Activated T-helper 1 cell treated with anti-CD3 and anti-CD28 coated beads, Interleukin-12 subunit alpha, Interleukin-12 subunit beta, Interleukin-2, Interleukin-4 antibody, amounts not matched to agents 30 ng/mL and 10 ng/mL and 1 ng/mL, durations not matched to agents 14 hours and 24 hours and 36 hours (primary cell): ENCODE measurements at regions of chr22 and their contacts with region 1.

Region 1: DNA sequence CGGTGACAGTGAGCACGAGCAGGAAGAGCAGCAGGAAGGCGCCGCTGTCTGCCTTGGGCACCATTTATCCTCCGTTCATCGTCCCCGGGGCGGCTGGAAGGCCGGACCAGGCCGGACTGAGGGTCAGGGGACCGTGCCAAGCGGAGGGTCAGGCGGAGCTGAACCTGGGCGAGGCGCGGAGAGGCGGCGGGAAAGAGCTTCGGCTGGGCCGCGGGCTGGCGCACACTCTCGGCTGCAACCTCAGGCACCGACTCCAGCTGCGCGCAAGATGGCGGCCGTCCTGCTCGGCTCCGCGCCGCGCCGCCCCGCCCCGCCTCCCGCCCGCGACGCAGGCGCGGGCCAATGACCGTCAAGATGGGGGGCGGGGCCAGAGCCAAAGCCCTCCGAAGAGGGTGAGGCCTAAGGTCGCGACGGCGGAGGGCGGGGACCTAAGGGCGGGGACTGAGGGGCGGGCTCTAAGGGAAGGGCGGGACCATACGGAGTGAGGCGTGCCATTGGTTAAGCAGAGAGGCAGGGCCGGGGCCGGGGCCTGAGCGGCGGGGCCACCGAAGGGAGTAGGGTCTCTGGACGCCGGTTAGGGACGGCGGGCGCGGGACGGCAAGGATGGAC is at the start of gene DGCR2:
- DNase-seq: peak; percentile 91
- H3K4me3 Mint-ChIP-seq: peak within 1 kb of the TSS; percentile 89
- H3K27ac Mint-ChIP-seq: peak within 1 kb of the TSS; percentile 64
- H3K4me1 Mint-ChIP-seq: peaks cover 47% of the 10 kb centered on the region
- H3K27me3 Mint-ChIP-seq: peaks cover 1% of the 10 kb centered on the region
- total RNA-seq, gene DGCR2: 23.2 and 24.1 TPM in 2 replicates

Region 2: GRCh38 chr22:19109198-19110067 is 12.8 kb before region 1 on chr22:
- intact Hi-C with region 1: loop called (anchors 1 kb)
- DNase-seq: peak; percentile 42
- H3K4me3 Mint-ChIP-seq: peak overlapping the region; percentile 66
- H3K27ac Mint-ChIP-seq: peak overlapping the region; percentile 62
- H3K4me1 Mint-ChIP-seq: peaks cover 54% of the 10 kb centered on the region
- H3K27me3 Mint-ChIP-seq: no peaks in the 10 kb centered on the region

Region 3: GRCh38 chr22:19143967-19144400 is 21.7 kb after region 1 on chr22:
- intact Hi-C with region 1: loop called (anchors 1 kb)
- DNase-seq: peak; percentile 40
- H3K4me3 Mint-ChIP-seq: peak overlapping the region; percentile 98
- H3K27ac Mint-ChIP-seq: peak overlapping the region; percentile 97
- H3K4me1 Mint-ChIP-seq: peaks cover 23% of the 10 kb centered on the region
- H3K27me3 Mint-ChIP-seq: peaks cover 22% of the 10 kb centered on the region

Region 4: DNA sequence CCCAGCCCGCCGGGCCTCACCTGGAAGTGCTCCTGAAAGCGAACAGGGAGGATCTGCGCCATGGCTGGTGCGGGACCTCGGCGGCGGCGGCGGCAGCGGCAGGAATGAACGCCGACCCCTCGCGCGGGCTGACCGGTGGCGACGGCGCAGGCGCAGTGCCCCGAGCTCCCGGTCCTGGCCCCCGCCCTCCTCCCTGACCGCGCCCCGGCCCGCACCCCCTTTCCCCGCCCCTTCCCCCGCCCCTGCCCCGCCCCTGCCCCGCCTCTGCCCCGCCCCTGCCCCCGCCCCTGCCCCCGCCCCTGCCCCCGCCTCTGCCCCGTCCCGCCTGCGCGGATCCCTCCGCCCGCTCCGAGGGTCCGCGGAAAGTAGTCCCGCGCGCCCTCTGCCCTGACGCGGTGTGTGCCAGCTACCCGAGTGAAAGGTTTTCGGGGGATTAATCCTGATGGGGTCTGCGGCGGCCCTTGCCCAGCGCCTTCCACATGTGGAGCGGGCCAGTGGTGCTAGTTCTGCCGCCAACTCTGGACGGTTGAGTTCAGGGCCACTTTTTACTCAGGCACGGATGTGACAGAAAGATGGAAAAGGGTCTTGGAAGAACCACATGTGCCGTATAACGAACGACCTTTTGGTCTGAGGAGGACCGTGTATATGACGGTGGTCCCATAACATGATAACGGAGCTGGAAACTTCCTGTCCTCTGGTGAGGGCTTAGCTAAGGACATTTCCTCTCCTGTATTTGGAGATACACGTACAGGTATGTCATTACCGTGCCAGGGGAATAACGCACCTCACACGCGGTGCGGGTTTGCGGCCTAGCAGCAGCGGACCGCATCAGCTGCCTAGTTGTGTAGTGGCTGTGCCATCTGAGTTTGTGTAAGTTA is 169.6 kb after region 1 on chr22 and contains the start of gene CLTCL1:
- intact Hi-C with region 1: loop called (anchors 1 kb)
- DNase-seq: peak; percentile 66
- H3K4me3 Mint-ChIP-seq: peak within 1 kb of the TSS; percentile 91
- H3K27ac Mint-ChIP-seq: peak within 1 kb of the TSS; percentile 88
- H3K4me1 Mint-ChIP-seq: peaks cover 24% of the 10 kb centered on the region
- H3K27me3 Mint-ChIP-seq: peaks cover 41% of the 10 kb centered on the region
- total RNA-seq, gene CLTCL1: 0.64 and 0.73 TPM in 2 replicates

Region 5: GRCh38 chr22:19776433-19777031 is 654.3 kb after region 1 on chr22:
- intact Hi-C with region 1: no loop called
- DNase-seq: no peak
- H3K4me3 Mint-ChIP-seq: no peak overlapping the region
- H3K27ac Mint-ChIP-seq: no peak overlapping the region
- H3K4me1 Mint-ChIP-seq: peaks cover 4% of the 10 kb centered on the region
- H3K27me3 Mint-ChIP-seq: peaks cover 12% of the 10 kb centered on the region